ENCODE measurements at regions of chr12 and their contacts with region 1.

Region 1: GRCh38 chr12:89160716-89161123 is 191.6 kb downstream of the DUSP6 start:
- DNase-seq: peak; percentile 93
- H3K4me3 ChIP-seq: no peak overlapping the region
- H3K27ac ChIP-seq: peak overlapping the region; percentile 52
- H3K4me1 ChIP-seq: peaks cover 79% of the 10 kb centered on the region
- H3K27me3 ChIP-seq: no peaks in the 10 kb centered on the region
- CTCF ChIP-seq: no peak

Region 2: DNA sequence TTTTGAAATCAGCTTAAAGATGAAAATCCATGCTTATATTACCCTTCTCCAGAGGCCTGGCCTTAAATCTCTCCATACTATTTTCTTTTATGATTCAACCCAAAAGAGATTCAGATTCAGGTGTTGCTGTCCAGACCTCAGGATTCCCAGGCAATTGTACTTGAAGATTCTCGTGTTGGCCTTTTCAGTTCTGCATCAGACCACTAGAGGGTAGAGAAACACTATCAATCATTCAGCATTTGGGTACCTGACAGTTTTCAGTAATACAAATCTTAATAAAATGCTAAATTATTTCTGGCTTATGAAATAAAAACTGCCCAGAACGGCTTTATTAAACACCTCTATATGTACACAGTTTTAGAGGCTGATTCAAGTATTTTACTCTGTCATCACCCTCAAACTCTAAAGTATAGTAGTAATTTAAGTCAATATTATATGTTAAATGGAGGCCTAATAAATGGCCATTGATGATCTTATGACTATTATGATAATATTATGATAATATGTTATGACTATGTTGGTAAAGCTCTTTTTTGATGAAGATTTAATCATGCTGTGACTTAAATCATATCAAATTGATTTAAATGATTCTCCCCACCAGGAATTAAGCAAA is 109.5 kb before region 1 on chr12:
- CTCF ChIA-PET with region 1: no interaction called
- POLR2A ChIA-PET with region 1: no interaction called
- intact Hi-C with region 1: loop called (anchors 2 kb)
- DNase-seq: peak; percentile 86
- H3K4me3 ChIP-seq: no peak overlapping the region
- H3K27ac ChIP-seq: no peak overlapping the region
- H3K4me1 ChIP-seq: peaks cover 66% of the 10 kb centered on the region
- H3K27me3 ChIP-seq: no peaks in the 10 kb centered on the region
- CTCF ChIP-seq: peak; percentile 95

Region 3: DNA sequence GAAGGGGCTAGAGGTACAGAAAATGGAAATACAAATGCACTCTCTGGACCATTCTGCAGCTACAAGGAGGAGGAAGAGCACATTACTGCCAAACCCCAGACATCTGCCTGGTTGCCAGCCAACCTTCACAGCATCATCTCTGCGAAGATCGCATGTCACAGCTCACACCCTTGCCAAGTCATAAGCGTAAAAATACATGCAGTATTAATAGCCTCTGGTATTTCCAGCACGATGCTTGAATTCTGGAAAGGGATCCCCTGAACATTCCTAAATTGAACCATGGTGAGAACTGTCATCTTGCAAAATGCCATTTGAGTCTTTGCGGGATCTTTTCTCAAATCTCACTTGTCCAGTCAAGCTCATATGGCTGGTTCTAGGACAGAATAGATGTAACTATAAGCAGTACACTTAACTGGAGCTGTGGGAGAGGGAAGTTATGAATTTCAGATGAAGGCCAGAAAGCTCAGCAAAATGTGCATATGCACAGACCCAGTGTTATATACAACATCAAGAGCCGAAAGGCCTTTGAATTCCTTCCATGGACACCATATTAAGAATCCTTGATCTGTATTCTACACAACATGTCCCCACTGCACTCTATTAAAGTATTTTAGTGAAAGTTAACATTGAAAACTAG is 20.0 kb before region 1 on chr12:
- CTCF ChIA-PET with region 1: no interaction called
- POLR2A ChIA-PET with region 1: no interaction called
- intact Hi-C with region 1: loop called (anchors 1 kb)
- DNase-seq: no peak
- H3K4me3 ChIP-seq: no peak overlapping the region
- H3K27ac ChIP-seq: no peak overlapping the region
- H3K4me1 ChIP-seq: peaks cover 46% of the 10 kb centered on the region
- H3K27me3 ChIP-seq: no peaks in the 10 kb centered on the region
- CTCF ChIP-seq: no peak

Region 4: GRCh38 chr12:89345830-89346740 is 185.4 kb after region 1 on chr12:
- CTCF ChIA-PET with region 1: no interaction called
- POLR2A ChIA-PET with region 1: no interaction called
- intact Hi-C with region 1: loop called (anchors 1 kb)
- DNase-seq: peak; percentile 99
- H3K4me3 ChIP-seq: peak overlapping the region; percentile 11
- H3K27ac ChIP-seq: peak overlapping the region; percentile 97
- H3K4me1 ChIP-seq: peaks cover 47% of the 10 kb centered on the region
- H3K27me3 ChIP-seq: no peaks in the 10 kb centered on the region
- CTCF ChIP-seq: no peak

Region 5: DNA sequence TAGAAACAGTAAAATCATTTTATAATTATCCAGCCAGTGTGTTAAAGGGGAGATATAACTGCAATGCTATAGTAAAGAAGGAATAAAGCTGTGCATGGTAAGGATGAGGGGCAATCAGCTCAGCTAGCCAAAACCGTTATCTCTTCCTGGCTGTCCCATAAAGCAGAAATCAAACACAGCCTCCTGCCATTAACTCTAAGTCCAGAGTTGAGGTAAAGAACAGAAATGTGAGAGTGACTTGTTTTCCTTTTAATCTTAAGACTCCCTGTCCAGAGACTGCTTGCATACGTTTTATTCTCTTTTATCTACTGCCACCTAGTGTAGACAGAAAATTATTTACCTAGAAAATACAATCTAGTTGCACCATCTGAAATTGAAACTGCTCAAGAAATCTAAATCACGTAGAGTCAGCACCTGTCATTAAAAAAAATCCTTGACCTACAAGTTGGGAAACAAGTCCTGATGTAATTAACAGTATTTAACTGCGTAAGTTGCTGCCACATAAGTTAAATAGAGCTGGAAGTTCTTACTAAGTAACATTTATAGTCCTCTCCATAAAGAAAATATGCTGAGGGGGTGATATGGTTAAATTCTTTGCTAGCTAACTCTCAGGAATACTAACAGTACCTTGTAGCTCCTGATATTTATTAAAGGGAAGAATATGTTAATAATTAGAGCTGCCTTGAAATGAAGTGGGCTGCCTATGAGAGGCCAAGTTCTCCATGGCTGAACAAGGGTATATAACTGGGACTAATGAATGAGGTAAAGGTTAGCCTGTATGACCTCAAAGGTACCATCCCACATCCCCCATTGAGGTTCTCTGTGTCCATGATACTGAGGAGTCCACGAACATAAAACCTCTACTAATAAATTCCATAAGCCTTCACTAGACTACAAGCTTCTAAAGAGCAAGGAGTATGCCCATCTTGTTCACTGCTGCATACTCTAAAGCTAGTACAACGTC is 301.2 kb after region 1 on chr12:
- CTCF ChIA-PET with region 1: no interaction called
- POLR2A ChIA-PET with region 1: no interaction called
- intact Hi-C with region 1: loop called (anchors 2 kb)
- DNase-seq: peak; percentile 91
- H3K4me3 ChIP-seq: peak overlapping the region; percentile 18
- H3K27ac ChIP-seq: peak overlapping the region; percentile 88
- H3K4me1 ChIP-seq: peaks cover 77% of the 10 kb centered on the region
- H3K27me3 ChIP-seq: no peaks in the 10 kb centered on the region
- CTCF ChIP-seq: peak; percentile 66